Common myeloid progenitor, CD34-positive (primary cell): ENCODE measurements at regions of chr20 and their contacts with region 1.

Region 1: DNA sequence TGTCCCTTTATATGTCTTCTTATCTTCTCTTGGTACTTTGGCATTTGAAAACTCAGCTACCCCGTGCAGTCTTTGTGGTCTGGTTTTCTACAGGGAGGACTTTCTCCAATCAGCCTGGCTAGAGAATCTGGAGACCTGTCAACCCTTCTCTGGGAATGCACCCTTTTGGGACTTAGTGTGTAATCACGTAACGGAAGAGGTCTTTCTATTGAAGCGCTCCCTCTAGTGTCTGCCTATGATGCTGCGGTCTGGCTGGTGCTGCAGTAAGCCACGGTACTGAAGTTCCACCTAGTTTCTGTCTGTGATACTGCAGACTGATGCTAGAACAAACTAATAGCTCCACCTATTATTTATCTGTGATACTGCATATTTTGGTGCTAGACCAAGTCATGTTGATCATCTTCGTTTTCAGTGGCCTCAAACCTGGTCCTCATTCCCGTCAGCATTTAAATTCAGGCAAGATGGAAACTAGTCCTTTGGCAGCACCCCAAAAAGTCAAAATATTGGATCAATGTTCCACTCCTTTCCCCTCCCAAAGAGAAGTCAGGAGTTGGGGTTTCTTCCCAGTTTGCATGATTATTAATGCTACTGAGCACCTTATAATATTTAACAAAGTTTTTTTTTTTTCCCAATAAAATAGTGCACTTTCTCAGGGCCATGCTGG is 12.5 kb upstream of the SIRPB2 start:
- DNase-seq: peak; percentile 94 to 96 (median 96)
- H3K4me3 ChIP-seq: no peak overlapping the region
- H3K27ac ChIP-seq: no peak overlapping the region
- H3K4me1 ChIP-seq: peaks cover 0 to 12% (median 4%) of the 10 kb centered on the region in 4 experiments
- H3K27me3 ChIP-seq: no peaks in the 10 kb centered on the region

Region 2: DNA sequence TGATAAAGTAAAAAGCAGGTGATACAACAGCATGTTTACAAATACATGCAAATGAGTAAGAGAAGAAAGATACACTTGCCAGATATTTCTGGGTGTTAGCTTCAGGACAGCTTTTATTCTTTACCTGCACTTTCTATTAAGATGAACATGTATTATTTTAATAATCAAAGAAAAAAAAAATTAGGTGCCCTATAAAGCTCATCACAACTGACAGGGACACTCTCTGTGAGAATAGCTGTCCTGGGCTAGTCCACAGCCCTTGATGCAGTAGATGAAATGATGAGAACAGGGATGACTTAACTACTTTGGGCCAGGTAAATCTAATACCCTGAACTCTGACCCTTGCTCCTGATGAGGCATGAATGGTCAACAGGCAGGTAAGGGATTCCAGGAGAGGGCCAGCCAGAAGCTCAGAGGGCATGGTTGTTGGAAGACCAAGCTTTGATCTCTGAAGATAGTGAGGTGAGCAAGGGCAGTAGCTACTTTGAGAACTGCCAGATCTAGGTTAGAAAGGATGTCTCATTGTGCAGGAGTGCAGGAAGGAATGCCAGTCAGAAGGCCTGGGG is 52.7 kb before region 1 on chr20:
- CTCF ChIA-PET with region 1: interaction called, 11 read pairs
- POLR2A ChIA-PET with region 1: no interaction called
- DNase-seq: peak in 2 of 3 donors; percentile 53 to 62
- H3K4me3 ChIP-seq: peak overlapping the region in 1 of 7 experiments; percentile 24
- H3K27ac ChIP-seq: no peak overlapping the region
- H3K4me1 ChIP-seq: no peaks in the 10 kb centered on the region
- H3K27me3 ChIP-seq: no peaks in the 10 kb centered on the region

Region 3: DNA sequence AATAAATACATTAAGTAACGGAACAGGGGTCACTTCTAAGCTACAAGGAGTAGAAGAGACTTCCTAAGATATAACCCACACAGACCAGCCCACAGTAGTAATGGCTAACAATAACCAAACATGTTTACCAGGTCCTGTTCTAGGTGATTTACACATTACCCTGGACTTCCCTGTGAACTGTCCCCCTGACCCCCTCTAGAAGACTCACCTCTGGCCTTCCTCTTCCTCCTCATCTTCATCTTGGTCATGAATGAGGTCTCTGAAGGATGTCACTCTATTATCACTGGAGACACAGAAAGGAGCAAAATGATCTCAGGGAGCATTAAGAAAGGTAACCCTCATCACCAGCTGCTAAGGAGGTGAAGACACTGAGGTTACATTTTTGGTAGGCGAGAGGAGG is 45.7 kb before region 1 on chr20:
- CTCF ChIA-PET with region 1: interaction called, 17 read pairs
- POLR2A ChIA-PET with region 1: no interaction called
- DNase-seq: no peak
- H3K4me3 ChIP-seq: no peak overlapping the region
- H3K27ac ChIP-seq: no peak overlapping the region
- H3K4me1 ChIP-seq: peaks cover 0 to under 1% (median 0%) of the 10 kb centered on the region in 4 experiments
- H3K27me3 ChIP-seq: no peaks in the 10 kb centered on the region

Region 4: DNA sequence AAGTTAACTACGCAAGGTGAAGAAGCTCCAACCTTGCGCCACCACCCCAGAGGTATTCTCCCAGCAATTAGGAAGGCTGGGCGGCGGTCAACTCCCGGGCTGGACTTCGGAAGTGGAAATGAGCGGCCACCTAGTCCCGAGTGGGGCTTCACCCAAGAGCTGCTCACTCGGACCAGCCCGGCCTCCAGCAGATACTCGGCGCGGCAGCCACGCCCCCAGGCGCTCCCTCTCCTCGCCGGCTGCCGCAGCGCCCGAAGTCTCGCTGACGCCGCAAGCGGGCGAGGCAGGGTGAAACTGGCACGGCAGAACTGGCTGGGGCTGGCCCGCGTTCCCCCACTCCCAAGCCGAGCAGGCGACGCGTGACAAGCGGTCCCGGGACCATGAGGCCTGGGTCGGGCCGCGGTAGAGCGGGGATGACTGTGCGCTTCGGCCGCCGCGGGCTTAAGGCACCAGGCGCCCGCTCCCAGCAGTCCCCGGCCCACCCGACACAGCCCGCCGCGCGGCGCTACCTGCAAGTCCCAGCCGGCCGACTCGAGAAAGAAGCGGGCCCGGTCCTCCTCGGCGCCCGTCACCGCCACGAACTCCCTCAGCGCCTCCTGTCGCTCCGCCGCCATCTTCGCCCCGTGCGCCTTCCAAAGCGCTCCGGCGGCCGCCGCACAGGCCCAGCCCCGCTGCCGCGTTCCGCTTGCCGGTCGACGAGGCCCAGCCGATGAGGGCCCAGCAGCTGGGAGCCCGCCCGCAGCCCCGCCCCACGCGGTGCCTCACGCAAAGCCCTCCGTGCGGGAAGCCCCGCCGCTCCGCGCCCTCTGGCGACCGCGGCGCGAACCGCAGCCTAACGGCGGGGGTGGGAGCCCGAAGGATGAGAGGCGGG is 37.2 kb before region 1 on chr20 and contains the start of gene NSFL1C:
- CTCF ChIA-PET with region 1: interaction called, 115 read pairs
- POLR2A ChIA-PET with region 1: interaction called, 3 read pairs
- DNase-seq: peak; percentile 96 to 98 (median 97)
- H3K4me3 ChIP-seq: peak within 1 kb of the TSS; percentile 84 to 91 (median 89)
- H3K27ac ChIP-seq: peak within 1 kb of the TSS; percentile 99 to 100
- H3K4me1 ChIP-seq: peaks cover 13 to 54% (median 39%) of the 10 kb centered on the region in 4 experiments
- H3K27me3 ChIP-seq: no peaks in the 10 kb centered on the region

Region 5: GRCh38 chr20:1474825-1475603 is 28.7 kb before region 1 on chr20:
- CTCF ChIA-PET with region 1: interaction called, 115 read pairs
- POLR2A ChIA-PET with region 1: interaction called, 3 read pairs
- DNase-seq: peak in 2 of 3 donors; percentile 43 to 51
- H3K4me3 ChIP-seq: no peak overlapping the region
- H3K27ac ChIP-seq: no peak overlapping the region
- H3K4me1 ChIP-seq: peaks cover 4 to 28% (median 16%) of the 10 kb centered on the region in 4 experiments
- H3K27me3 ChIP-seq: no peaks in the 10 kb centered on the region

Region 6: GRCh38 chr20:1491281-1491840 is 12.3 kb before region 1 on chr20 and contains the start of gene SIRPB2:
- CTCF ChIA-PET with region 1: interaction called, 99 read pairs
- POLR2A ChIA-PET with region 1: no interaction called
- DNase-seq: peak; percentile 45 to 92 (median 86)
- H3K4me3 ChIP-seq: peak within 1 kb of the TSS in 5 of 7 experiments; percentile 3 to 65 (median 49)
- H3K27ac ChIP-seq: no peak within 1 kb of the TSS
- H3K4me1 ChIP-seq: peaks cover 20 to 60% (median 41%) of the 10 kb centered on the region in 4 experiments
- H3K27me3 ChIP-seq: no peaks in the 10 kb centered on the region